ENCODE measurements at regions of chr3 and their contacts with region 1.

Region 1: DNA sequence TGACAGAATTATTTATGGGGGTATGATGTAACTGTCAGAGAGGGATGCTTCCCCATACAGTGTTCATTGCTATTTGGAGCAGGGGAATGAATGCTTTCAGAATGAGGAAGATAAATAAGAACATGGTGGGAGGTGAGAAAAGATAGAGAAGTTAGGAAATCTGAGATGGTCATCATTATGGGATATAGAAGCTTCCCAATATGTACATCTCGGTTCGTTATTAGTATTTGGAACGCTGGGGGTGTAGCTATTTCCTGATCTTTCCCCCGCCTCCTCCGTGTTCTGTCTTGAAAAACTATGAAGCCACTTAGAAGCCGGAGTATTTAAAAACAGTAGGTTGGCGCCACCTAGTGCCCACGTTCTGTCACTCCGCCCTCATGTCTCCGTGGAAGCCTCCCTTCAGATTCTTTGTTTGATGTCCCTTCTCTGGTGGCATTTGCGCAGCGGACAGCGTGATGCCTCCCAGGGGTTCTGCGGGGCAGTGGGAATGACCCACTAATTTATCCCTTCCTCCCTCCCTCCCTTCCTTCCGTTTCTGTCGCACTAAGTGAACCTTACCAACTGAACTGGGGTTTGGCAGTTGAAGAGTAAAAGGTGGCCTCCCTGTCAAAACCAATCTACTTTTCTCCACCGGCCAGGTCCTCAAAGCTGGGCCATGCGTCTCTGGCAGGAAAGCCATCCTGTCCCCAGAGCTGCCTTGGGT is 184.5 kb downstream of the FEZF2 start:
- DNase-seq: peak; percentile 69
- H3K4me3 ChIP-seq: no peak overlapping the region
- H3K27ac ChIP-seq: no peak overlapping the region
- H3K4me1 ChIP-seq: no peaks in the 10 kb centered on the region
- CTCF ChIP-seq: peak; percentile 93

Region 2: DNA sequence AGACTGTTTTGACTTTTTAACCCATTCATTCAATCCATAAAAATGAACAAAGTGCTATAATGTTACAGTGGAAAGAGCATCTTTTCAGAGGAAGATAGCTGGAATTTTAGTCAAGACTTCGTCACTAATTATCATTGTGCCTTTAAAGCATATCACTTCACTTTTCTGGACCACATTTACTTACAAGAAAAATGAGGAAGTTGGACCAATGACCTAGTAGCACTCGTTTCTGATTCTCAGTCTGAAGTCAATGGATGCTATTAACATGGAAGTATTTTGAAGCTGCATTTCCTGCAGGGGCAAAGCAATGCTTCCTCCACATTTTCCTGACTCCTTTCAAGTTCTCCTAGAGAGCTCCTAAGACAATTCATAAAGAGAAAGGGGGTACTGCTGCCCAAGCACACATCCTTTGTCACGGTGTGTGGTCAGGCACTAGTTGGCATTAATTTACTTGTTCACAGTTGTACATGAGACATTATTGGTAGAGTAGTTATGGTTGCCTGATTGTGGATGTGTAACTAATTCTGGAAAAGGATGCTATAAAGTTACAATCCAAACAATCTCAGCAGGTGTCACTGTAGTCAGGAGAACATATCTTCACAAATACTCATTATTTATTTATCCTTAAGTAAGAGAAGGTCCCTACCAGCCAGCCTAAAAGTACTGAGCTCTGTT is 1986.6 kb before region 1 on chr3:
- CTCF ChIA-PET with region 1: no interaction called
- POLR2A ChIA-PET with region 1: no interaction called
- intact Hi-C with region 1: no loop called
- DNase-seq: no peak
- H3K4me3 ChIP-seq: no peak overlapping the region
- H3K27ac ChIP-seq: no peak overlapping the region
- H3K4me1 ChIP-seq: no peaks in the 10 kb centered on the region
- CTCF ChIP-seq: no peak

Region 3: DNA sequence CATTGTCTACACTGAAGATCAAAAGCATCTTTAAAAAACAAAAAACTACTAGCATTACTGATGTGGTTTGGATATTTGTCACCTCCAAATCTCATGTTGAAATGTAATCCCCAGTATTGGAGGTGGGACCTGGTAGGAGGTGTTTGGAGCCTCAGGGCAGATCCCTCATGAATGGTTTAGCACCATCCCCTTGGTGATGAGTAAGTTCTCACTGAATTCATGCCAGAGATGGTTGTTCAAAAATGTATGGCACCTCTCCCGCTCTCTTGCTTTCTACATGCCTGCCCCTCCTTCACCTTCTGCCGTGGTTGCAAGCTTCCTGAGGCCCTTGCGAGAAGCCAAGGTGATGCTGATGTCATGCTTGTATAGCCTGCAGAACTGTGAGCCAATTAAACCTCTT is 801.0 kb before region 1 on chr3:
- CTCF ChIA-PET with region 1: no interaction called
- POLR2A ChIA-PET with region 1: no interaction called
- intact Hi-C with region 1: no loop called
- DNase-seq: no peak
- H3K4me3 ChIP-seq: no peak overlapping the region
- H3K27ac ChIP-seq: no peak overlapping the region
- H3K4me1 ChIP-seq: no peaks in the 10 kb centered on the region
- CTCF ChIP-seq: no peak

Region 4: DNA sequence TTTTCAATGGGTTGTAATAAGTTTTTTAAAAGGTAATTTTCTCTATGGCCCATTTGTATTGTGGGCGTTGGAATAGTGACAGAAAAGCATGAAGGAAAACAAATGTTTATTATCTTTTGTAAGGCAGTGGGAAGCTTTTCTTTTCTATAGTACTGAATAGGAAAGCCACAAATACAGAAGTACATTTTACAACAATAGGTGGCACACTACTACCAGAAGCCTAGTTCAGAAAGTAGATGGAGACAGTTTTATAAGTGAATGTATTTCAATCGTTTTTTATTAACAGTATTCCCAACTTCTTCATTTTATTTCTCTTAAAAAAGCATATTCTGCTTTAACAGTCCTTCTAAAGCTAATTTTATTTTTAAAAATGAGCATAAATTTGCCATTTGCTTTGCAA is 330.8 kb before region 1 on chr3:
- CTCF ChIA-PET with region 1: no interaction called
- POLR2A ChIA-PET with region 1: no interaction called
- intact Hi-C with region 1: loop called (anchors 10 kb)
- DNase-seq: no peak
- H3K4me3 ChIP-seq: no peak overlapping the region
- H3K27ac ChIP-seq: no peak overlapping the region
- H3K4me1 ChIP-seq: no peaks in the 10 kb centered on the region
- CTCF ChIP-seq: peak; percentile 54

Measured in OCI-LY7 (cell line).